Mucosa of descending colon (tissue), 3 donors: ENCODE measurements at regions of chr1 and their contacts with region 1.

Region 1: GRCh38 chr1:58783993-58784757 is at the start of gene JUN:
- DNase-seq: peak; percentile 99 to 100 (median 100)
- ATAC-seq: peak; percentile 82
- H3K4me3 ChIP-seq: peak within 1 kb of the TSS; percentile 97
- H3K4me1 ChIP-seq: peaks cover 10% of the 10 kb centered on the region
- CTCF ChIP-seq: no peak
- total RNA-seq, gene JUN: 138 to 303 (median 153) TPM

Region 2: DNA sequence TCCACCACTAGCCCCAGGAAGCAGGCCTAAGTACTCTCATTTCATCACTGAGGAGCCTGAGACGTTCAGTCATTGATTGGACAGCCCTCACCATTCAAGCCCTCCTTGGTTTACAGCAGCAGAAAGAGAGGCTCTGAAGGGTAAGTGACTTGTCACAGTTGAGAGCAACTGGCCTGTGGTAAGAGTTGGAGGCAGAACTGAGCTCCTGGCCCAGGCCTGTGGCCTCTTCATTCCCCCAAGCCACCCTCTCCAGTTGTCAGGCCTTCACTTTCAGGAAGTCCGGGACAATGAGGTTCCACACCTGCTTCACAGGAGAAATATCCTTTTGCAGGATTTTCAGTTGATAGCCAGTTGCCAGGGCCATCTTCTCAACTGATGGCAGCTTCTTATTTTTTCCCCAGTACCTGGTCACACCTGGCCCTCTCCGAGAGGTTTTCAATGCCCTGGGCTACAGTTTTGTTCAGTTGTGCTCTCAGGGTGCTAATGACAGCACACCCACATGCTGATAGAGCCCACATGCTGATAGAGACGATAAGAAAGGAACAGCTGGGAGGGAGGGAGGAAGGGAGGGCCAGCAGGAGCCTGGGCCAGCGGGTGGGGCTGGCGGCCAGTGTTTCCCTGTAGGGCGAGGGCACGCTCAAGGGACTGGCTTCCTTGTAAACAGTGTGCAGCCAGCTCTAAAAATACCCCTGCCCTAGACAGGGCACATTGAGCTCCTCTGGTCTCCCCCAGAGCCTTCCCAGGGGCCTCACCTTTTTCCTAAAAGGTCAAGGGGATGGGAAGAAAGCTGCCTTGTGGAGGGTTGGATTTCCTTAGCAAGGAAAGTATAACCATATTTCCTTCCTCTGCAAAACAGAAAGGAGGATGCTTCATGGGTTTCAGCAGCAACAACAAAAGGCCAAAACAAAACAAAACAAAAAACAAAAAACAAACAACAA is 112.3 kb after region 1 on chr1:
- intact Hi-C with region 1: loop called (anchors 5 to 10 kb)
- DNase-seq: peak; percentile 89 to 92 (median 89)
- ATAC-seq: peak; percentile 84
- H3K4me3 ChIP-seq: no peak overlapping the region
- H3K4me1 ChIP-seq: peaks cover 77% of the 10 kb centered on the region
- CTCF ChIP-seq: no peak

Region 3: GRCh38 chr1:58903514-58904298 is 119.5 kb after region 1 on chr1:
- intact Hi-C with region 1: loop called (anchors 5 to 10 kb)
- DNase-seq: peak; percentile 92 to 96 (median 96)
- ATAC-seq: peak; percentile 91
- H3K4me3 ChIP-seq: peak overlapping the region; percentile 12
- H3K4me1 ChIP-seq: peaks cover 28% of the 10 kb centered on the region
- CTCF ChIP-seq: no peak

Region 4: GRCh38 chr1:59699227-59699847 is 915.2 kb after region 1 on chr1:
- intact Hi-C with region 1: loop called in 1 of 2 experiments (anchors 10 kb)
- DNase-seq: peak in 1 of 3 donors; percentile 41
- ATAC-seq: peak; percentile 76
- H3K4me3 ChIP-seq: no peak overlapping the region
- H3K4me1 ChIP-seq: peaks cover 5% of the 10 kb centered on the region
- CTCF ChIP-seq: peak; percentile 82